OCI-LY7 (cell line): ENCODE measurements at regions of chr5 and their contacts with region 1.

Region 1: GRCh38 chr5:119274767-119275130 is 81.1 kb upstream of the TNFAIP8 start:
- DNase-seq: peak; percentile 58
- H3K4me3 ChIP-seq: peak overlapping the region; percentile 48
- H3K27ac ChIP-seq: peak overlapping the region; percentile 98
- H3K4me1 ChIP-seq: peaks cover 99% of the 10 kb centered on the region
- CTCF ChIP-seq: no peak

Region 2: GRCh38 chr5:119022017-119022745 is 252.6 kb before region 1 on chr5:
- CTCF ChIA-PET with region 1: interaction called, 3 read pairs
- POLR2A ChIA-PET with region 1: interaction called, 6 read pairs
- intact Hi-C with region 1: loop called (anchors 5 kb)
- DNase-seq: peak; percentile 79
- H3K4me3 ChIP-seq: no peak overlapping the region
- H3K27ac ChIP-seq: peak overlapping the region; percentile 71
- H3K4me1 ChIP-seq: peaks cover 73% of the 10 kb centered on the region
- CTCF ChIP-seq: peak; percentile 94

Region 3: GRCh38 chr5:119290161-119290569 is 15.4 kb after region 1 on chr5:
- CTCF ChIA-PET with region 1: interaction called, 4 read pairs
- POLR2A ChIA-PET with region 1: interaction called, 48 read pairs
- intact Hi-C with region 1: loop called (anchors 2 kb)
- DNase-seq: peak; percentile 90
- H3K4me3 ChIP-seq: peak overlapping the region; percentile 19
- H3K27ac ChIP-seq: peak overlapping the region; percentile 1
- H3K4me1 ChIP-seq: peaks cover 74% of the 10 kb centered on the region
- CTCF ChIP-seq: no peak

Region 4: GRCh38 chr5:119309326-119309725 is 34.6 kb after region 1 on chr5:
- CTCF ChIA-PET with region 1: interaction called, 3 read pairs
- POLR2A ChIA-PET with region 1: interaction called, 25 read pairs
- intact Hi-C with region 1: loop called (anchors 1 kb)
- DNase-seq: peak; percentile 79
- H3K4me3 ChIP-seq: peak overlapping the region; percentile 54
- H3K27ac ChIP-seq: peak overlapping the region; percentile 95
- H3K4me1 ChIP-seq: peaks cover 98% of the 10 kb centered on the region
- CTCF ChIP-seq: no peak

Region 5: GRCh38 chr5:119355685-119356611 is 81.2 kb after region 1 on chr5 and contains the start of gene TNFAIP8:
- CTCF ChIA-PET with region 1: no interaction called
- POLR2A ChIA-PET with region 1: interaction called, 21 read pairs
- intact Hi-C with region 1: no loop called
- DNase-seq: peak; percentile 69
- H3K4me3 ChIP-seq: peak within 1 kb of the TSS; percentile 73
- H3K27ac ChIP-seq: peak within 1 kb of the TSS; percentile 91
- H3K4me1 ChIP-seq: peaks cover 91% of the 10 kb centered on the region
- CTCF ChIP-seq: no peak
- total RNA-seq, gene TNFAIP8: 92.9 and 95.1 TPM in 2 replicates